Caco-2 (cell line): ENCODE measurements at regions of chr19 and their contacts with region 1.

Region 1: GRCh38 chr19:13978347-13978733 is 26.0 kb downstream of the DCAF15 start:
- DNase-seq: peak; percentile 85 to 89
- H3K4me3 ChIP-seq: peak overlapping the region; percentile 38
- H3K4me3 Mint-ChIP-seq: peak overlapping the region; percentile 65
- H3K27ac Mint-ChIP-seq: peak overlapping the region; percentile 35
- H3K4me1 ChIP-seq: peaks cover 19% of the 10 kb centered on the region
- H3K4me1 Mint-ChIP-seq: peaks cover 10% of the 10 kb centered on the region
- H3K27me3 ChIP-seq: no peaks in the 10 kb centered on the region
- H3K27me3 Mint-ChIP-seq: no peaks in the 10 kb centered on the region
- CTCF ChIP-seq: no peak

Region 2: DNA sequence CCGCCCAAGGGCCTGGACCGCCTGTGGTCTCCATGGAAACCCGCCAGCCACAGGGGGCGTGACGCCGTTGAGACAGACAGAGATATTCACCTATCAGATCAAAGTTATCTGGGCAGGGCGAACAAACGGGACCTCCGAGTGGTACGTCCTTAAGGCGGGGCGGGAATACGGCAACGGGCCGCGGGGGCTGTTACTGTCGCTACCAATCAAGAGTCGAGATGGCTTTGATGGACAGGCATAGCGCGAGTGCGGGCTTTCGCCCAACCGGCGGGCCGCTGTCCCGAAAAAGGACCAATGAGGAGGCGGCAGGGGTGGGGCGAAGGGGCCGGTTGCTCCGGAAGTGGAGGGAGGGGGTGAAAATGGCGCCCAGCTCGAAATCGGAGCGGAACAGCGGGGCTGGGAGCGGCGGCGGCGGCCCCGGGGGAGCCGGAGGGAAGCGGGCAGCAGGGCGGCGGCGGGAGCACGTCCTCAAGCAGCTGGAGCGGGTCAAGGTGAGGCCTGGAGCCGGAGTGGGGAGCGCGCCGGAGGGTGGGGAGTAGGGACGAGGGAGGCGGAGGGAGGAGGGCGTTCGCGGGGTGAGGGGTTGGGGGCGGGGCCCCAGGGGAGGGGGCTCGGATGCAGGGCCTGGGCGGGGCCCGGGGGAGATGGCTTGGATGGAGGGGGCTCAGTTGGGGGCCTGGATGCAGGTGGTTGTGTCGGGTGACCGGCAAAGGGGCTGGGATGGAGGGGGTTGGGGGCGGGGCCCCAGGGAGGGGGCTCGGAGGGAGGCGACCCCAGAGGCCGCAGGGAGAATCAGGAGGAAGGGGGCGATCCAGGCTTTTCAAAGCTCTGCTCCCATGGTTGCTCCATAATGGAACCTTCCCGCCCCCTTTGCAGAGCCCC is 25.9 kb before region 1 on chr19 and contains the start of gene DCAF15:
- CTCF ChIA-PET with region 1: no interaction called
- POLR2A ChIA-PET with region 1: no interaction called
- intact Hi-C with region 1: loop called (anchors 1 kb)
- DNase-seq: peak; percentile 99
- H3K4me3 ChIP-seq: peak within 1 kb of the TSS; percentile 90
- H3K4me3 Mint-ChIP-seq: peak within 1 kb of the TSS; percentile 71
- H3K27ac Mint-ChIP-seq: peak within 1 kb of the TSS; percentile 81
- H3K4me1 ChIP-seq: 0 out of 2 replicates have a peak, but pooled peaks cover 6% of the 10 kb centered on the region
- H3K4me1 Mint-ChIP-seq: no peaks in the 10 kb centered on the region
- H3K27me3 ChIP-seq: no peaks in the 10 kb centered on the region
- H3K27me3 Mint-ChIP-seq: no peaks in the 10 kb centered on the region
- CTCF ChIP-seq: no peak
- total RNA-seq, gene DCAF15: 41.1 and 43.0 TPM in 2 replicates

Region 3: GRCh38 chr19:13995017-13995728 is 16.8 kb after region 1 on chr19:
- CTCF ChIA-PET with region 1: no interaction called
- POLR2A ChIA-PET with region 1: no interaction called
- intact Hi-C with region 1: no loop called
- DNase-seq: no peak
- H3K4me3 ChIP-seq: no peak overlapping the region
- H3K4me3 Mint-ChIP-seq: no peak overlapping the region
- H3K27ac Mint-ChIP-seq: no peak overlapping the region
- H3K4me1 ChIP-seq: no peaks in the 10 kb centered on the region
- H3K4me1 Mint-ChIP-seq: no peaks in the 10 kb centered on the region
- H3K27me3 ChIP-seq: no peaks in the 10 kb centered on the region
- H3K27me3 Mint-ChIP-seq: no peaks in the 10 kb centered on the region
- CTCF ChIP-seq: no peak

Region 4: DNA sequence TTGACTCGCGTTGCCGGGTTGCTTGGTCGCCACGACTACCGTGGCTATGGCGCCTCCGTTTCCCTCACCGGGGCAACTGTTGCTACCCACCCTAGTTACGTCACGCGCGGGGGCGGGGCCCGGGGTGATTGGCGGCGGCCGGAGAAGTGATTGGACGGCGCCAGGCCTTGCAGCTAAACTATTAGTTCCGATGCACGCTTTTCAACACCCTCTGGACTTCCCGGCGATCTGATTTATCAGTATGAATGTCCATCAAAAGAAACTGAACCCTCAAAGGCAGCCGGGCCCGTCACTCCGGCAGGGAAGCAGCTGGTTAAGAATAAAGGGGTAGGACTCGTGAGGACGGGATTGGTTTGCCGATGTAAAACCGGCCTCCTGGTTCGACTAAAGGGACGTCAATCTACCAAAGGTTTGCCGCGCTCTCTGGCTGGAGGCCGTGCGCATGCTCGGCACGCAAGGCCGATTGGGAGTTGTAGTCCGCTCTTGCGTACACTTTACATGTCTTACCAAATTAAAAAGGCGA is 28.0 kb after region 1 on chr19 and contains the start of gene RFX1:
- CTCF ChIA-PET with region 1: no interaction called
- POLR2A ChIA-PET with region 1: interaction called, 3 read pairs
- intact Hi-C with region 1: loop called (anchors 1 kb)
- DNase-seq: peak; percentile 99
- H3K4me3 ChIP-seq: peak within 1 kb of the TSS; percentile 93
- H3K4me3 Mint-ChIP-seq: peak within 1 kb of the TSS; percentile 84
- H3K27ac Mint-ChIP-seq: peak within 1 kb of the TSS; percentile 98
- H3K4me1 ChIP-seq: no peaks in the 10 kb centered on the region
- H3K4me1 Mint-ChIP-seq: no peaks in the 10 kb centered on the region
- H3K27me3 ChIP-seq: no peaks in the 10 kb centered on the region
- H3K27me3 Mint-ChIP-seq: no peaks in the 10 kb centered on the region
- CTCF ChIP-seq: no peak
- total RNA-seq, gene RFX1: 11.5 and 13.4 TPM in 2 replicates

Region 5: DNA sequence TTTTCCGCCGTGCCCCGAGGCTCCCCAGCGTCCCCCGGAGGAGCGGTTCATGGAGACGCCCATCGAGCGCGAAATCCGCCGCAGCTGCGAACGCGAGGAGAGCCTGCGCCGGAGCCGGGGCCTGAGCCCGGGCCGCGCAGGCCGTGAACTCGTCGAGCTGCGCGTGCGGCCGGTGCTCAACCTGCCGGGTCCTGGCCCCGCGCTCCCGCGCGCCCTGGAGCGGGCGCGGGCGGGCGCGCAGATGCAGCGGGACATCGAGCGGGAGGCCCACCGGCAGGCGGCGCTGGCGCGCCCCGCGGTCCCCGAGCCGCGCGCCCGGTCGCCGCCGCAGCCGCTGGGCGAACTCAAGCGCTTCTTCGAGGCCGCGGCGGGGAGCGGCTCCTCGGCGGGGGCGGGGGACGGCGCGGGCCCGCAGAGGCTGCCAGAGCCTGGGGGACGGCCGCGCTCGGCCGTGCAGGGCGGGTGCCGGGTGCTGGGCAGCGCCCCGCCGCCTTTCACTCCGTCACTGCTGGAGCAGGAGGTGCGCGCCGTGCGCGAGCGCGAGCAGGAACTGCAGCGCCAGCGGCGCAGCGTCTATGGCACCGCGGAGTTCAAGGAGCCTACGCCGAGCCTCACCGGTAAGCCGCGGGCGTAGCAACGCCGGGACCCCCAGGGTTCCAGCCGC is 95.1 kb after region 1 on chr19:
- CTCF ChIA-PET with region 1: no interaction called
- POLR2A ChIA-PET with region 1: interaction called, 3 read pairs
- intact Hi-C with region 1: loop called (anchors 10 kb)
- DNase-seq: peak; percentile 54 to 85
- H3K4me3 ChIP-seq: peak overlapping the region; percentile 84
- H3K4me3 Mint-ChIP-seq: peak overlapping the region; percentile 100
- H3K27ac Mint-ChIP-seq: peak overlapping the region; percentile 97
- H3K4me1 ChIP-seq: no peaks in the 10 kb centered on the region
- H3K4me1 Mint-ChIP-seq: no peaks in the 10 kb centered on the region
- H3K27me3 ChIP-seq: no peaks in the 10 kb centered on the region
- H3K27me3 Mint-ChIP-seq: no peaks in the 10 kb centered on the region
- CTCF ChIP-seq: peak in 1 of 2 experiments; percentile 36

Region 6: DNA sequence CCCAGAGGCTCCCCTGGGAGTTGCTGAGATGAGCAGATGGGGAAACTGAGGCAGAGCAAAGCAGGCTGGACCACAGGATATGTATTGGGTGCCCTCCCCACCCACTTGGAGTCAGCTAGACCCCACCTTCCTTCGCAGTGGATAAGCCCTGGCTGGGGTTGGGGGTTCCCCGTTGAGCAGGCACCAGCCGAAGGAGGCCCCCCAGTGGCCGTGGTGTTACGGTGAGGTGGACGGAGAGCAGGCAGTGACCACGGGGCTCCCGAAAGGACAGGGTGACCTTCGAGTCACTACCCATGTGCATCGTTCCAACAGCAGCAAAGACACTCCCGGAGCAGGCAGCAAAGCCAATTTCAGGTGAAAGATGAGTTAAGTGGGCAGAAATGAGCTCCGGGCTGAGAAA is 340.5 kb after region 1 on chr19:
- CTCF ChIA-PET with region 1: no interaction called
- POLR2A ChIA-PET with region 1: no interaction called
- intact Hi-C with region 1: no loop called
- DNase-seq: peak in 1 of 2 experiments; percentile 12
- H3K4me3 ChIP-seq: no peak overlapping the region
- H3K4me3 Mint-ChIP-seq: no peak overlapping the region
- H3K27ac Mint-ChIP-seq: no peak overlapping the region
- H3K4me1 ChIP-seq: no peaks in the 10 kb centered on the region
- H3K4me1 Mint-ChIP-seq: no peaks in the 10 kb centered on the region
- H3K27me3 ChIP-seq: no peaks in the 10 kb centered on the region
- H3K27me3 Mint-ChIP-seq: no peaks in the 10 kb centered on the region
- CTCF ChIP-seq: no peak

Region 7: GRCh38 chr19:14748601-14749000 is 770.3 kb after region 1 on chr19:
- CTCF ChIA-PET with region 1: no interaction called
- POLR2A ChIA-PET with region 1: no interaction called
- intact Hi-C with region 1: no loop called
- DNase-seq: no peak
- H3K4me3 ChIP-seq: no peak overlapping the region
- H3K4me3 Mint-ChIP-seq: no peak overlapping the region
- H3K27ac Mint-ChIP-seq: no peak overlapping the region
- H3K4me1 ChIP-seq: no peaks in the 10 kb centered on the region
- H3K4me1 Mint-ChIP-seq: no peaks in the 10 kb centered on the region
- H3K27me3 ChIP-seq: no peaks in the 10 kb centered on the region
- H3K27me3 Mint-ChIP-seq: peaks cover 6% of the 10 kb centered on the region
- CTCF ChIP-seq: no peak